Right cardiac atrium (tissue), 5 donors: ENCODE measurements at regions of chr18 and their contacts with region 1.

Region 1: GRCh38 chr18:50928551-50928950 is 39.3 kb upstream of the ELAC1 start:
- DNase-seq: no peak
- ATAC-seq: no peak
- H3K4me3 ChIP-seq: no peak overlapping the region
- H3K27ac ChIP-seq: no peak overlapping the region
- H3K4me1 ChIP-seq: no peaks in the 10 kb centered on the region
- H3K27me3 ChIP-seq: no peaks in the 10 kb centered on the region

Region 2: GRCh38 chr18:50194631-50195532 is 733.7 kb before region 1 on chr18 and contains the start of gene MYO5B:
- intact Hi-C with region 1: no loop called
- DNase-seq: peak in 2 of 3 donors; percentile 53 to 70
- ATAC-seq: peak; percentile 71 to 81
- H3K4me3 ChIP-seq: peak within 1 kb of the TSS; percentile 62
- H3K27ac ChIP-seq: no peak within 1 kb of the TSS
- H3K4me1 ChIP-seq: no peaks in the 10 kb centered on the region
- H3K27me3 ChIP-seq: no peaks in the 10 kb centered on the region
- total RNA-seq, gene MYO5B: 1.4 to 3.2 (median 2.4) TPM

Region 3: DNA sequence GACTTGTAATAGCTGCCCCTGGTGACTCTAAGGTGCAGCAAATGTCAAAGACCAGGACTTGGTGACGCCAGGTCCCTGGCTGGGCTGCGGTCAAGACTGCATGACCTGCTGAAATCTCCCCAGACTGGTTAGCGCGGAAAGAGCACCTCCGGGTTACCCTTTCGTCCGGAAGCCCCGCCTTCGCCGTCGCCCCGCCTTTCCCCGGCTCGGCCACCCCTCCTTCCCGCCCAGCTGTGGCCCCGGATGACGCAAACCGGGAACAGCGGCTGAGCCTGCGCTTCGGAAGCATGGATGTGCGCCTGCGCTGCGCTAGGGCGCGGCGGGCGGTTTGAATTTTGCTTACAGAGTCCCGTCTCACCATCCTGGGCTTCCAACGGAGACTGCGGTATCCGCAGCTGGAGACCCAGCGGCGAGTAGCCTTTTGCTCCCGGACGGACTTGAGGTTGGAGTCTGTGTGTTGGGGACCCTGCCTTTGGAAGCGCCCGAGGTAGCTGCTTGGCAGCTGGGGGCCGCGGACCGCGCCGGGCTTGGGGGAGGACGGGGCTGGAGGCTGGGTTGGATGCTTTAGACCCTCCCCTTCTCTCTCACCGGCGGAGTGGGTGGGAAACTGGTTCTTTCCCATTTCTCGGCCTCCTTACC is 553.7 kb before region 1 on chr18 and contains the start of gene SKA1:
- intact Hi-C with region 1: no loop called
- DNase-seq: peak; percentile 92 to 97 (median 97)
- ATAC-seq: peak; percentile 100
- H3K4me3 ChIP-seq: peak within 1 kb of the TSS; percentile 51
- H3K27ac ChIP-seq: peak within 1 kb of the TSS; percentile 81
- H3K4me1 ChIP-seq: no peaks in the 10 kb centered on the region
- H3K27me3 ChIP-seq: no peaks in the 10 kb centered on the region
- total RNA-seq, gene SKA1: 0.11 to 0.49 (median 0.28) TPM

Region 4: DNA sequence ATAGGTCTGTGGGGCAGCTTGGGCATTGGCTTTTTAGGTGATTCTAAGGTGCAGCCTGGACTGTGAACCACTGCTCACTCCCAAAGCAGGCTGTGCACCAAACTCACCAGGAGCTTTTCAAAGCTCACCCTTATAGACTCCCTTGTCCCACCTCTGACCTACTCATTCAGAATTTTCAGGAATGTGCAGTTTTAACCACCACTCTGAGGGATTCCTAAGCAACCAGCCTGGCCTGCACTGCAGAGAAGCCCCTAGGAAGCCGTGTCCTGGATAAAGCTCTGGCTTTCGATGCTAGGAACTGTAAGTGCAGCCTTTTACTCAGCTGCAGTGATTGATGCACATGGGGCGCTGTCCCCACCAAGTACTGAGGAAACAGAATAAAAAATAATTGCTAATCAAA is 141.7 kb before region 1 on chr18:
- intact Hi-C with region 1: no loop called
- DNase-seq: no peak
- ATAC-seq: no peak
- H3K4me3 ChIP-seq: no peak overlapping the region
- H3K27ac ChIP-seq: no peak overlapping the region
- H3K4me1 ChIP-seq: peaks cover 3% of the 10 kb centered on the region
- H3K27me3 ChIP-seq: no peaks in the 10 kb centered on the region

Region 5: DNA sequence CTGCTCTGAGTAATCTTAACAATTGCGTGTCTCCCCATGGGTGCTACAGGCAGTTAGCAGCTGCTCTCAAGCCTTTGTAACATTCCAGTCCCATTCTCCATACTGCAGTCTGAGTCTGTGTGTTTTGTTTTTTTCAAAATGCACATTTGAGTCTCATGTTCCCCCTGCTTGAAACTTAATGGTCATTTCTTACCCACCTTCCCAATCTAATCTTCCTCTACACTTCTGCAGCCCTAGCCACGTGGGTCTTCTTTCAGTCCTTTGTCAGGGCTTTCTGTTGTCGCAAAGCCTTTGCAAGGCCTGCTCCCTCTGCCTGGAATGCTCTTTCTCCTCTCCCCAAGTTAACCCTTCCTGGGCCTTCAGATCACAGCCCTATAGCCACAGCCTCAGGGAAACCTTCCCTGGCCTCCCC is 63.8 kb after region 1 on chr18:
- intact Hi-C with region 1: no loop called
- DNase-seq: no peak
- ATAC-seq: no peak
- H3K4me3 ChIP-seq: no peak overlapping the region
- H3K27ac ChIP-seq: no peak overlapping the region
- H3K4me1 ChIP-seq: no peaks in the 10 kb centered on the region
- H3K27me3 ChIP-seq: no peaks in the 10 kb centered on the region

Region 6: GRCh38 chr18:51051105-51051712 is 122.7 kb after region 1 on chr18:
- intact Hi-C with region 1: loop called in 1 of 4 experiments (anchors 10 kb)
- DNase-seq: no peak
- ATAC-seq: peak; percentile 77 to 79
- H3K4me3 ChIP-seq: no peak overlapping the region
- H3K27ac ChIP-seq: no peak overlapping the region
- H3K4me1 ChIP-seq: no peaks in the 10 kb centered on the region
- H3K27me3 ChIP-seq: no peaks in the 10 kb centered on the region